Mammary epithelial cell (primary cell): ENCODE measurements at regions of chr11 and their contacts with region 1.

Region 1: GRCh38 chr11:36265793-36266628 is 23.2 kb downstream of the COMMD9 start:
- DNase-seq: peak; percentile 29
- H3K4me3 ChIP-seq: no peak overlapping the region
- H3K27ac ChIP-seq: no peak overlapping the region
- H3K4me1 ChIP-seq: no peaks in the 10 kb centered on the region
- H3K27me3 ChIP-seq: no peaks in the 10 kb centered on the region
- CTCF ChIP-seq: peak; percentile 85 to 91

Region 2: GRCh38 chr11:35485656-35486322 is 780.2 kb before region 1 on chr11:
- CTCF ChIA-PET with region 1: no interaction called
- dilution Hi-C with region 1: no loop called
- in situ Hi-C with region 1: loop called (anchors 25 kb)
- intact Hi-C with region 1: loop called (anchors 1 kb)
- DNase-seq: peak; percentile 58
- H3K4me3 ChIP-seq: no peak overlapping the region
- H3K27ac ChIP-seq: no peak overlapping the region
- H3K4me1 ChIP-seq: no peaks in the 10 kb centered on the region
- H3K27me3 ChIP-seq: no peaks in the 10 kb centered on the region
- CTCF ChIP-seq: peak; percentile 93 to 94

Region 3: DNA sequence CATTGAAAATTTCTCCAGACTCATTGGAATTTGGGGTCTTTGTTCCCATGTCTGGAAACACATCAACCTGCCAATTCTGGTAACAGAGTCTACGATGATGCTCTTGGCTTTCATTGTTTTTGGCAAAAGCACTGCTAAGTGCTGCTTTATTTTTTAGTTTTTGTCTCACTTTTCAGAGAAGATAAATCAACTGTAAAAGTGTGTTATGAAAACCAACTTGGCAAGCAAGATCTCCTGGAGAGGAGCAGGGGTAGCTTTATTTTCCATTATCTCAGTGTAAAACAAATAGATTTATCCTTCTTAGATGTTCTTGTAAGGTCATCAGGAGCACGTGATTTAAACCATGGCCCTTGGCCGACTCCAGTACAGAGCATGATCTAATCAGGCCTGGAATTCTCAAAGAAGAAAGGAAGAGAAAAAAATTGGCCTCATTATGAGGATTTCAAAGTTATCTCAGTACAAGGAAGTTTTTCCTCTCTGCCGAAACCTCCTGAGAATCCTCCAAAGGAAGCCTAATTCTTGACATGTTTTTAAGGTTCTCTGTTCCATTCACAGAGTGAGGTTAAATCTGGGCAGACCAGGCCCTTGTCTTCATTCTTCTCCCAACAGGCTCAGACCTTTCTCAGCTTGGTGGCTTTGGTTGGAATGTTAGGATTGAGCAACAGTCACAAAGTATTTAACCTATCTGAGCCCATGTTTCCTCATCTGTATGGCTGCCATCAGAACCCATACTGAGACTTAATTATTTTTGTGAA is 724.2 kb before region 1 on chr11:
- CTCF ChIA-PET with region 1: interaction called, 10 read pairs
- dilution Hi-C with region 1: no loop called
- in situ Hi-C with region 1: no loop called
- intact Hi-C with region 1: no loop called
- DNase-seq: no peak
- H3K4me3 ChIP-seq: no peak overlapping the region
- H3K27ac ChIP-seq: no peak overlapping the region
- H3K4me1 ChIP-seq: peaks cover 15% of the 10 kb centered on the region
- H3K27me3 ChIP-seq: no peaks in the 10 kb centered on the region
- CTCF ChIP-seq: no peak

Region 4: DNA sequence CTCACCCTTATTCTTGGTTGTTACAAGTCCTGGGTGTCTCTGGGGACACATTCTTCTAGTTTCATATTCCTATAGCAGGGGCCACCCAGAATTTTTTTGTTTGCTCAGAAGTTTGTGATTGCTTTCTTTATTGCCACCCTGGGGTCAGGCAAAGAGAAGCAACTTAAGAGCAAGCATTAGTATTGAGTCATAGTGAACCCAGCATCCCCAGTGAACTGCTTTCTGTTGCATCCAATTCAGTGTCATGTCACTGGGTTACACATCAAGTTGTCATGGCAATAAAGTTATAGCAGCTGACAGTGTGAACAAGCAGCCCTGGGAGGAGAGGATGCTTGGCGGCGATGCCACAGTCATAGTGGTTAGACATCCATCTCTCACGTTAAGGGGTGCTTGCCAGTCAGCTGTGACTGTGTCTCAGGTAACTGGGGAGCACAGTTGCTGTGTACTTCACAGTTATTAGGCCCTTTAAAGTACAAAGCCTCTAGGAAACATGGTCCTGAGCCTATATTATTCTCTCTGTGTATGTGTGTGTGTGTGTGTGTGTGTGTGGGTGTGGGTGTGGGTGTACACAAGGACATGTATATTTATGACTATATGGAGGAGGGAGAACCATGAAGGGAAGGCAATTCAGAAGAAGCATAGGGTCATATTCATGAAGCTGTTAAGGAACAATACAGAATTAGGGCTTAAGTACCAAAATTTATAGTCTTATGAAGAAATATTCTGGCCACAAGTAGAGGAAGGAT is 551.0 kb before region 1 on chr11:
- CTCF ChIA-PET with region 1: no interaction called
- dilution Hi-C with region 1: no loop called
- in situ Hi-C with region 1: no loop called
- intact Hi-C with region 1: loop called (anchors 5 kb)
- DNase-seq: peak; percentile 32
- H3K4me3 ChIP-seq: no peak overlapping the region
- H3K27ac ChIP-seq: no peak overlapping the region
- H3K4me1 ChIP-seq: no peaks in the 10 kb centered on the region
- H3K27me3 ChIP-seq: no peaks in the 10 kb centered on the region
- CTCF ChIP-seq: no peak

Region 5: GRCh38 chr11:36041988-36042611 is 223.9 kb before region 1 on chr11:
- CTCF ChIA-PET with region 1: no interaction called
- dilution Hi-C with region 1: no loop called
- in situ Hi-C with region 1: loop called in 1 of 2 experiments (anchors 25 kb)
- intact Hi-C with region 1: loop called (anchors 1 kb)
- DNase-seq: no peak
- H3K4me3 ChIP-seq: no peak overlapping the region
- H3K27ac ChIP-seq: no peak overlapping the region
- H3K4me1 ChIP-seq: peaks cover under 1% of the 10 kb centered on the region
- H3K27me3 ChIP-seq: no peaks in the 10 kb centered on the region
- CTCF ChIP-seq: peak; percentile 37 to 52

Region 6: GRCh38 chr11:36073411-36074203 is 192.4 kb before region 1 on chr11:
- CTCF ChIA-PET with region 1: no interaction called
- dilution Hi-C with region 1: no loop called
- in situ Hi-C with region 1: loop called in 1 of 2 experiments (anchors 25 kb)
- intact Hi-C with region 1: loop called (anchors 1 kb)
- DNase-seq: peak; percentile 30
- H3K4me3 ChIP-seq: no peak overlapping the region
- H3K27ac ChIP-seq: no peak overlapping the region
- H3K4me1 ChIP-seq: peaks cover 18% of the 10 kb centered on the region
- H3K27me3 ChIP-seq: no peaks in the 10 kb centered on the region
- CTCF ChIP-seq: no peak

Region 7: DNA sequence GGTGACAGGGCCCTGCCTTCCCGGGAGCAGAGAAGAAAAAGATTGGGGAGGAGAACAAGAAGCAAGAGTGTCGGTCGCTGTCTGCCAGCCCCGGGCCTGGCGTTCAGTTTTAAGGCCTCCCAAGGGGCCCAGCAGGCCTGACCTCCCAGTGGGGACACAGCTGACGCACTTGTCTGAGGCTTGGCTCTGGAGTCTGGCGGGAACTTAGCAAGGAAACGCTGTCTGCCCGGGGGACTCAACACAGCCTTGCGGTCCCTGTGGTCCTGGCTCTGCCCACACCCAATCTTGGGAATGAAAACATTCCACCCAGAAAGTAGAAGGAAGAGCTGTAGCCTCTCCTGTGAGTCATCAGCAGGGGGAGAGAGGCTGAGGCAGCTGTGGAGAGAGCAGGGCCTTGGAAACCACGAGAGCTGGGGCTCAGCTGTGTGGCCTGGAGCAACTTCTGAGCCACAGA is 189.7 kb after region 1 on chr11:
- CTCF ChIA-PET with region 1: no interaction called
- dilution Hi-C with region 1: no loop called
- in situ Hi-C with region 1: no loop called
- intact Hi-C with region 1: no loop called
- DNase-seq: peak; percentile 97
- H3K4me3 ChIP-seq: no peak overlapping the region
- H3K27ac ChIP-seq: peak overlapping the region; percentile 54
- H3K4me1 ChIP-seq: peaks cover 18% of the 10 kb centered on the region
- H3K27me3 ChIP-seq: no peaks in the 10 kb centered on the region
- CTCF ChIP-seq: no peak